ENCODE measurements at regions of chr14 and their contacts with region 1.

Region 1: GRCh38 chr14:73295198-73295796 is 58.0 kb downstream of the PAPLN start:
- DNase-seq: no peak
- H3K4me3 ChIP-seq: no peak overlapping the region
- CTCF ChIP-seq: peak; percentile 43

Region 2: DNA sequence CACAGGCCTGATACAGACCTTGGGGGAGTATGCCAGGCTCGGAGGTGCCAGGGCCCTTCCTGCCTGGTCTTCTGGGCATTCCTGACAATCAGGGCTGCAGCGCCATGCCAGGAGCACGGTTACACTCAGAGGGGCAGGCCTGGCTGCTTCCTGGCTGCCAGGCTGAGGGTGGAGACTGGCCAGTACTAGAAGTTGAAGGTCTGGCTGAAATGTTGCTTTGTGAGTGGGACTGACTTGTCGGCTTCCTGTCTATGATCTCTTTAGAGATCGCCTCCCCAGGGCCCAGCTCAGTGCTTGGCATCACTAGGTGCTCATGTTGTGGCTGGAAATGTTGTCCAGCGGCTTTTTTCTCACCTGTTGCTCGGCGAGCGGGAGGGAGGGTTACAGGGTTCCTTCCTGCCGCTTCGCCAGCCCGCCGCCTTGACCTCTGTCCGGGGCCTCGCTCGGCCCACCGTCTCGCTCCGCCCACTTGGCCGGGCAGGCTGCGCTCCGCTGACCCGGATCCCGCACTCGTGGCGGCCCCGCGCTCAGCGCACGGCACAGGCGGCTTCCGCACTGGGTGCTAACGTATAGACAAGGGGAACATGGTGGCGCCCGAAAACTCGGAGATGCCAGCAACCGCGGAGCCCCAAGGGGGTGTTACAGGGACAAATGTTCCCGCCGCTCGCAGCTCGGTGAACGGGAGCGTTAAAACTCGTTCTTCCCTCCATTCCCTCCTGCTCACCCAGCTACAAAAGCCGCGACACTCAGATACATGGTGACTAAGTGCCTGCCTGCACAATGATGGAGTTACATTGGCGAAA is 25.4 kb before region 1 on chr14:
- CTCF ChIA-PET with region 1: interaction called, 22 read pairs
- POLR2A ChIA-PET with region 1: no interaction called
- DNase-seq: no peak
- H3K4me3 ChIP-seq: peak overlapping the region; percentile 38
- CTCF ChIP-seq: no peak

Region 3: GRCh38 chr14:73311708-73312030 is 16.4 kb after region 1 on chr14:
- CTCF ChIA-PET with region 1: interaction called, 44 read pairs
- POLR2A ChIA-PET with region 1: no interaction called
- DNase-seq: no peak
- H3K4me3 ChIP-seq: no peak overlapping the region
- CTCF ChIP-seq: no peak

Region 4: DNA sequence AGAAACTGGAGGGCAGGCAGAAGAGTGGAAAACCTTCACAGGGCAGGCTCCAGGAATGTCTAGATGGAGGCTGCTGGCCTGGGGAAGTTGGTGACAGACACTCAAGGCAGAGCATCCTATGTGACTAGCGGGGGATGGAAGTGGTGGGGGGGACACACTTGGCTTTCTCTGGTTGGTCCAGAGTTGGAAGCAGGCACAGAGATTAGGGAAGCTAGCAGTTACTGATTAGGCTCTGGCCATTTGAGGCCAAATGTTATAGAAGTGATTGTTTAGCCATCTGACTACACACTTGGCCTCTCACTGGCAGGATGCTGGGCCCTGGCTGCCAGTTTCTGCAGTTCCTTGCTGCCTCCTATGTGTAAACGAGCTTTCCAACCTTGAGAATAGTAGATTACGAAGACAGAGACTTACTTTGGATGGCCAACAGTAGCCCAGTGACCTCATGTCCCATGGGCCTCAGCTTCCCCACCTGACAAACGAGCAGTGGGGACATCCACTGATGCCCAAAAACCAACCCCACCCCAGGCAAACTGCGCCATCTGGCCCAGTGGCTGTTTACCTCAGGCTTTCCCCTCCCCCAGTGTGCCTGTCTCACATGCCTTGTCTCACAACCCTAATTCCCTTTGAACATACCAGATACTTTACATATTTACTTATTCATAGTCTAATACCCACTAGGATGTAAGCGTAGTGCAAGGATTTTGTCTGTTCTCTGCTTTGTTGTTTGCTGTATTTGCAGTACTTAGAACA is 44.7 kb after region 1 on chr14:
- CTCF ChIA-PET with region 1: interaction called, 11 read pairs
- POLR2A ChIA-PET with region 1: no interaction called
- DNase-seq: no peak
- H3K4me3 ChIP-seq: no peak overlapping the region
- CTCF ChIP-seq: no peak

Region 5: DNA sequence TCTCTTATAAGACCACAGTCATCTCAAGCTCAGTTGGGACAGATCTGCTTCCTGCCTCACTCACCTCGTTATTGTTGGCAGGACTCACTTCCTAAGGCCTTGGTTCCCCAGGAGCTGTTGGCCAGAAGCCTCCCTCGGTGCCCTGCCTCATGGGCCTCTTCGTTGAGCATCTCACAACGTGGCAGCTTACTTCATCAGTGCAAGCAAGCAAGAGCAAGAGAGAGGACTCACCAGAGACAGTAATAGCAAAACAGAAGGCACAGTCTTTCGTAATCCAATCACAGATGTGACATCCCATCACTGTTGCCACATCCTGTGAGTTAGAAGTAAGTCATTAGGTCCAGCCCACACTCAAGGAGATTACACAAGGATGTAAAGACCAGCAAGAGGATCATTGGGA is 168.1 kb after region 1 on chr14:
- CTCF ChIA-PET with region 1: interaction called, 270 read pairs
- POLR2A ChIA-PET with region 1: no interaction called
- DNase-seq: peak; percentile 93
- H3K4me3 ChIP-seq: no peak overlapping the region
- CTCF ChIP-seq: no peak

Region 6: DNA sequence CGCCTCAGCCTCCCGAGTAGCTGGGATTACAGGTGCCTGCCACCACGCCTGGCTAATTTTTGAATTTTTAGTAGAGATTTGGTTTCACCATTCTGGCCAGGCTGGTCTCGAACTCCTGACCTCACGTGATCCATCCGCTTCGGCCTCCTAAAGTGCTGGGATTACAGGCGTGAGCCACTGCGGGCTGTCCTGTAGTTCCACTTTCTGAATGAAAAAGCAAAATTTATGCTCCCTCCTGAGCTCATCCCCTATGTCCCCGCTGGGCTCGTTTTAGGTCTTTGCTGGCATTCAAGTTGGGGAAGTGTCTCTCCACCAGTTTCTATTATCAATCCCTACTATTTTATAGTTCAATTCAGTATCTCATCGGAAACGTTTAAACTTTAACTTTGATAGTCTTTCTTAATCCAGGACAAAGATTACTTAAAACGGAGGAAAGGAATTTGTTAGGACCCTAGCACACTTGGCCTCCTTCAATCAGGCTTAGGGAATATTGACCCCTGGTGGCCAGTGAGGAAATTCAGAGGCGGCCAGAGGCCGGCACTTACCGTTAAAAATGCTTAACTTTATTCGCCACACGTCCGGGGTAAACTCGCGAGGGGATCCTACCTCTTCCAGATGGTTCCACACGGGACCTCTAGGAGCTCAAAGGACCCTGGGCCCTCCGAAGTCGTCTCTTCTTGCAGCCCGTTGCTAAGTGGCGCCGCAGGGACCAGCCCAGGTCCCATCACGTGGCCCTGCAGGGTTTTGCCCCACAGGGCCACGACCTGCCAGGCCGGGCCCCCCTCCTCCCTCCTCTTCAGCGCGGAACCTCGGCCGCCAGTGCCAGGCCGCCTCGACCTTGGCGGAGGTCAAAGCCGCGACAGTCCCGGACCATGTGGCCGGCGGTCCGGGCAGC is 338.1 kb after region 1 on chr14:
- CTCF ChIA-PET with region 1: interaction called, 14 read pairs
- POLR2A ChIA-PET with region 1: no interaction called
- DNase-seq: no peak
- H3K4me3 ChIP-seq: peak overlapping the region; percentile 52
- CTCF ChIP-seq: peak; percentile 71